Naive thymus-derived CD4-positive, alpha-beta T cell (primary cell): ENCODE measurements at regions of chr2 and their contacts with region 1.

Region 1: DNA sequence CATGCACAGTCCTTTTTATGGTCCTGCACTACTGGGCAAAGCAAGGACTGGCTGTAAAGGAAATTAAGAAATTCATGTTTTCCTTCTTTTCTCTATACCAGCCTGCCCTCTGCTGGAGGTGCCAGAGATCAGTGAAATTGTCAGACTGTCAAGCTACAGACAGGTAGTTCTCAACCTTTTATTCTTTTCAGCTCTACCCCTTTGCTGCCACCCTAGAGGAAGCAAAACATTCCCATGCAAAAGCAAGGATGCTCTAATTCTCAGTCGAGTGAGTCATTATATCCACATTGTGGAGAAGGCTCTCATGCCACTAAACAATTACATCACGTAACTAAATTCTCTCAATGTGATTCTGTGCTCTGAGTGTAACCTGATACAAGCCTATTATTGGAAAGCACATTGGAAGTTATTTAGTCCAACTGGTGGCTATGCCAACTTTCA is 25.0 kb upstream of the RAPGEF4 start:
- DNase-seq: peak in 7 of 9 donors; percentile 16 to 51 (median 46)
- ATAC-seq: peak; percentile 61
- H3K4me3 ChIP-seq: no peak overlapping the region
- H3K4me3 Mint-ChIP-seq: no peak overlapping the region
- H3K27ac ChIP-seq: no peak overlapping the region
- H3K27ac Mint-ChIP-seq: no peak overlapping the region
- H3K4me1 ChIP-seq: no peaks in the 10 kb centered on the region
- H3K4me1 Mint-ChIP-seq: no peaks in the 10 kb centered on the region
- H3K27me3 ChIP-seq: no peaks in the 10 kb centered on the region
- H3K27me3 Mint-ChIP-seq: peaks cover 0 to 25% (median 4%) of the 10 kb centered on the region in 5 donors

Region 2: GRCh38 chr2:171598713-171599319 is 1111.8 kb before region 1 on chr2:
- CTCF ChIA-PET with region 1: interaction called, 3 read pairs
- POLR2A ChIA-PET with region 1: no interaction called
- intact Hi-C with region 1: loop called in 1 of 2 experiments (anchors 1 kb)
- DNase-seq: peak in 7 of 9 donors; percentile 22 to 64 (median 51)
- ATAC-seq: peak; percentile 94
- H3K4me3 ChIP-seq: no peak overlapping the region
- H3K4me3 Mint-ChIP-seq: no peak overlapping the region
- H3K27ac ChIP-seq: no peak overlapping the region
- H3K27ac Mint-ChIP-seq: no peak overlapping the region
- H3K4me1 ChIP-seq: peaks cover 0 to 3% of the 10 kb centered on the region in 2 donors
- H3K4me1 Mint-ChIP-seq: peaks cover 0 to 6% (median 0%) of the 10 kb centered on the region in 7 donors
- H3K27me3 ChIP-seq: no peaks in the 10 kb centered on the region
- H3K27me3 Mint-ChIP-seq: peaks cover 0 to 25% (median 4%) of the 10 kb centered on the region in 5 donors

Region 3: DNA sequence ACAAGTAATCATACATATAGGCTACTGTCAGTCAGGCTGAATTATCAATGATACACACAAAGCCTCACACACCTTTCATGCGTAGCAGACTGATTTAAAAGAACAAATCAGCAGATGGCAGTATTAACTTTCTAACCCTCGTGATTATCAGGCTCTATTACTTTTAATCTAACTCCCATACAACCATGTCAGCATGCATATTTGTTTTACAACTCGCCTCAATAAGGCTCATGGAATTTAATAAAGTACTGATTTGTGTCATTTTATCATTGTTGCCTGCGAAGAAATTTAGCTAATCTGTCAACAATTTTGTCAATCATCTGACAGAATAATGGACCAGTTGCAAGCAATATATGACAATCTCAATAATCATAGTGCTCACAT is 899.4 kb before region 1 on chr2:
- CTCF ChIA-PET with region 1: no interaction called
- POLR2A ChIA-PET with region 1: no interaction called
- intact Hi-C with region 1: loop called in 1 of 2 experiments (anchors 5 kb)
- DNase-seq: peak in 4 of 9 donors; percentile 3 to 28 (median 14)
- ATAC-seq: no peak
- H3K4me3 ChIP-seq: no peak overlapping the region
- H3K4me3 Mint-ChIP-seq: no peak overlapping the region
- H3K27ac ChIP-seq: no peak overlapping the region
- H3K27ac Mint-ChIP-seq: no peak overlapping the region
- H3K4me1 ChIP-seq: no peaks in the 10 kb centered on the region
- H3K4me1 Mint-ChIP-seq: no peaks in the 10 kb centered on the region
- H3K27me3 ChIP-seq: no peaks in the 10 kb centered on the region
- H3K27me3 Mint-ChIP-seq: no peaks in the 10 kb centered on the region

Region 4: GRCh38 chr2:172329774-172330671 is 380.6 kb before region 1 on chr2:
- CTCF ChIA-PET with region 1: no interaction called
- POLR2A ChIA-PET with region 1: no interaction called
- intact Hi-C with region 1: no loop called
- DNase-seq: peak in 4 of 9 donors; percentile 8 to 27 (median 18)
- ATAC-seq: no peak
- H3K4me3 ChIP-seq: no peak overlapping the region
- H3K4me3 Mint-ChIP-seq: peak overlapping the region in 4 of 10 donors; percentile 9 to 32 (median 32)
- H3K27ac ChIP-seq: no peak overlapping the region
- H3K27ac Mint-ChIP-seq: peak overlapping the region in 4 of 9 donors; percentile 15 to 67 (median 52)
- H3K4me1 ChIP-seq: peaks cover 0 to 7% of the 10 kb centered on the region in 2 donors
- H3K4me1 Mint-ChIP-seq: peaks cover 0 to 15% (median 8%) of the 10 kb centered on the region in 7 donors
- H3K27me3 ChIP-seq: no peaks in the 10 kb centered on the region
- H3K27me3 Mint-ChIP-seq: peaks cover 0 to 7% (median 0%) of the 10 kb centered on the region in 5 donors

Region 5: DNA sequence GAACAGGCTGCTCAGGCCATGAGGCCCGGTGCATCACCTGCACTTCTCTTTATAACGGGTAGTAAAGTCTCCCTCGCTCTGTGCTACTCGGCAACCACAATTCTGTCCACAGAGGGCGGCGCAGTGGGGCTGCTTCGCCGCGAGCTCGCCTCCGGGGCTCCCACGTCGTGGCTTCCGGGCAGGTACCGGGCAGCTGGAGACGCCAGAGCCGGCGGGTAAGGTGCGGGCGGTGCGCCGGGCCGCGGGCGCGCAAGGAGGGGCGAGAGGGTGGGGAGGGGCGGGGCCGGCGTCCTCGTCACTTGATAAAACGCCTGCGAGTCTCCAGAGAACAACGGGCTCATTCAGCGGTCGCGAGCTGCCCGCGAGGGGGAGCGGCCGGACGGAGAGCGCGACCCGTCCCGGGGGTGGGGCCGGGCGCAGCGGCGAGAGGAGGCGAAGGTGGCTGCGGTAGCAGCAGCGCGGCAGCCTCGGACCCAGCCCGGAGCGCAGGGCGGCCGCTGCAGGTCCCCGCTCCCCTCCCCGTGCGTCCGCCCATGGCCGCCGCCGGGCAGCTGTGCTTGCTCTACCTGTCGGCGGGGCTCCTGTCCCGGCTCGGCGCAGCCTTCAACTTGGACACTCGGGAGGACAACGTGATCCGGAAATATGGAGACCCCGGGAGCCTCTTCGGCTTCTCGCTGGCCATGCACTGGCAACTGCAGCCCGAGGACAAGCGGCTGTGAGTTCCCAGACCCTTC is 283.2 kb before region 1 on chr2 and contains the start of gene ITGA6:
- CTCF ChIA-PET with region 1: no interaction called
- POLR2A ChIA-PET with region 1: no interaction called
- intact Hi-C with region 1: loop called in 1 of 2 experiments (anchors 2 kb)
- DNase-seq: peak; percentile 55 to 84 (median 80)
- ATAC-seq: peak; percentile 81
- H3K4me3 ChIP-seq: peak within 1 kb of the TSS; percentile 76
- H3K4me3 Mint-ChIP-seq: peak within 1 kb of the TSS in 7 of 10 donors; percentile 92 to 100 (median 98)
- H3K27ac ChIP-seq: peak within 1 kb of the TSS; percentile 76
- H3K27ac Mint-ChIP-seq: peak within 1 kb of the TSS in 8 of 9 donors; percentile 90 to 96 (median 95)
- H3K4me1 ChIP-seq: peaks cover 17 to 44% of the 10 kb centered on the region in 2 donors
- H3K4me1 Mint-ChIP-seq: peaks cover 21 to 65% (median 46%) of the 10 kb centered on the region in 7 donors
- H3K27me3 ChIP-seq: no peaks in the 10 kb centered on the region
- H3K27me3 Mint-ChIP-seq: peaks cover 0 to 82% (median 0%) of the 10 kb centered on the region in 5 donors
- total RNA-seq, gene ITGA6: 13.1 to 179 (median 135) TPM

Region 6: DNA sequence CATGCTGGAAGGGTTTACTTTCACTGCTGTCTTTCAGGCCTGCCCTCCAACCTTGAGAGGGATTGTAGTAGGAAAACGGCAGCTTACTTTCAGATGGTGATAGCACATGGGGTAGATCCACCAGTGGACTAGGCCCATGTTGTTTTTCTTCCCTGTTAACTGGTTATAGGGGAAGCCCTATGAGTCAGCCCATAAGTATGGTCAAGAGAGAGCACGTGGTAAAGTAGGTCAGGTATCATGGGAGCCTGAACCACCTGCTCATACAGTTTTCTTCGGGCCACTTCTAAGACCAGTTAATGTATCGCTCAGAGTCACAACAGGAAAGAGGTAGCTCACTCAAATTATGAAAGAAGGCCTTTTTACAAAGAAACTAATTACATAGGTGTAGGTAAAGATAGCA is 121.7 kb before region 1 on chr2:
- CTCF ChIA-PET with region 1: interaction called, 4 read pairs
- POLR2A ChIA-PET with region 1: no interaction called
- intact Hi-C with region 1: loop called (anchors 1 to 2 kb)
- DNase-seq: no peak
- ATAC-seq: no peak
- H3K4me3 ChIP-seq: no peak overlapping the region
- H3K4me3 Mint-ChIP-seq: peak overlapping the region in 1 of 10 donors; percentile 2
- H3K27ac ChIP-seq: peak overlapping the region; percentile 7
- H3K27ac Mint-ChIP-seq: peak overlapping the region in 7 of 9 donors; percentile 7 to 76 (median 48)
- H3K4me1 ChIP-seq: peaks cover 5 to 9% of the 10 kb centered on the region in 2 donors
- H3K4me1 Mint-ChIP-seq: peaks cover 27 to 66% (median 57%) of the 10 kb centered on the region in 7 donors
- H3K27me3 ChIP-seq: no peaks in the 10 kb centered on the region
- H3K27me3 Mint-ChIP-seq: no peaks in the 10 kb centered on the region

Region 7: GRCh38 chr2:172674034-172674967 is 36.3 kb before region 1 on chr2:
- CTCF ChIA-PET with region 1: interaction called, 6 read pairs
- POLR2A ChIA-PET with region 1: no interaction called
- intact Hi-C with region 1: loop called in 1 of 2 experiments (anchors 1 kb)
- DNase-seq: peak in 7 of 9 donors; percentile 7 to 38 (median 28)
- ATAC-seq: peak; percentile 68
- H3K4me3 ChIP-seq: peak overlapping the region; percentile 40
- H3K4me3 Mint-ChIP-seq: peak overlapping the region in 9 of 10 donors; percentile 25 to 68 (median 47)
- H3K27ac ChIP-seq: no peak overlapping the region
- H3K27ac Mint-ChIP-seq: no peak overlapping the region
- H3K4me1 ChIP-seq: no peaks in the 10 kb centered on the region
- H3K4me1 Mint-ChIP-seq: peaks cover 0 to 5% (median 0%) of the 10 kb centered on the region in 7 donors
- H3K27me3 ChIP-seq: no peaks in the 10 kb centered on the region
- H3K27me3 Mint-ChIP-seq: peaks cover 0 to 4% (median 0%) of the 10 kb centered on the region in 5 donors